ENCODE measurements at regions of chr1 and their contacts with region 1.

Region 1: GRCh38 chr1:32817159-32817814 is at the starts of genes S100PBP and YARS1:
- DNase-seq: peak; percentile 95
- ATAC-seq: peak; percentile 91
- H3K4me3 ChIP-seq: peak within 1 kb of the TSS; percentile 94 to 98
- H3K27ac ChIP-seq: peak within 1 kb of the TSS; percentile 98
- H3K4me1 ChIP-seq: peaks cover 17 to 32% of the 10 kb centered on the region in 2 experiments
- H3K27me3 ChIP-seq: no peaks in the 10 kb centered on the region
- CTCF ChIP-seq: no peak
- POLR2A ChIP-seq: no peak
- RAD21 ChIP-seq: no peak
- total RNA-seq, gene S100PBP: 38.2 TPM
- total RNA-seq, gene YARS1: 244 TPM

Region 2: GRCh38 chr1:33036526-33037503 is 219.5 kb after region 1 on chr1 and contains the start of gene AK2:
- CTCF ChIA-PET with region 1: no interaction called
- POLR2A ChIA-PET with region 1: no interaction called
- RAD21 ChIA-PET with region 1: no interaction called
- intact Hi-C with region 1: loop called (anchors 5 kb)
- DNase-seq: peak; percentile 98
- ATAC-seq: peak; percentile 99
- H3K4me3 ChIP-seq: peak within 1 kb of the TSS; percentile 83 to 98
- H3K27ac ChIP-seq: peak within 1 kb of the TSS; percentile 70
- H3K4me1 ChIP-seq: peaks cover 10 to 13% of the 10 kb centered on the region in 2 experiments; a peak in 3 of 4 replicates
- H3K27me3 ChIP-seq: no peaks in the 10 kb centered on the region
- CTCF ChIP-seq: no peak
- POLR2A ChIP-seq: no peak
- RAD21 ChIP-seq: no peak
- total RNA-seq, gene AK2: 233 TPM

Measured in HCT116 (cell line).